PC-9 (cell line): ENCODE measurements at regions of chr7 and their contacts with region 1.

Region 1: GRCh38 chr7:27160546-27161213 is 4.2 kb upstream of the HOXA7 start:
- DNase-seq: peak; percentile 70 to 88
- H3K4me3 ChIP-seq: peak overlapping the region; percentile 71
- H3K27ac ChIP-seq: no peak overlapping the region
- H3K4me1 ChIP-seq: 0 out of 2 replicates have a peak, but pooled peaks cover 3% of the 10 kb centered on the region
- H3K27me3 ChIP-seq: no peaks in the 10 kb centered on the region
- CTCF ChIP-seq: peak; percentile 100

Region 2: GRCh38 chr7:25565949-25566348 is 1594.7 kb before region 1 on chr7:
- CTCF ChIA-PET with region 1: no interaction called
- POLR2A ChIA-PET with region 1: no interaction called
- intact Hi-C with region 1: loop called (anchors 5 kb)
- DNase-seq: peak; percentile 66 to 67
- H3K4me3 ChIP-seq: no peak overlapping the region
- H3K27ac ChIP-seq: no peak overlapping the region
- H3K4me1 ChIP-seq: no peaks in the 10 kb centered on the region
- H3K27me3 ChIP-seq: peaks cover 45% of the 10 kb centered on the region
- CTCF ChIP-seq: peak; percentile 100

Region 3: GRCh38 chr7:26090927-26091519 is 1069.7 kb before region 1 on chr7:
- CTCF ChIA-PET with region 1: no interaction called
- POLR2A ChIA-PET with region 1: no interaction called
- intact Hi-C with region 1: loop called (anchors 5 kb)
- DNase-seq: peak in 1 of 2 experiments; percentile 50
- H3K4me3 ChIP-seq: no peak overlapping the region
- H3K27ac ChIP-seq: no peak overlapping the region
- H3K4me1 ChIP-seq: peaks cover 31% of the 10 kb centered on the region
- H3K27me3 ChIP-seq: no peaks in the 10 kb centered on the region
- CTCF ChIP-seq: peak; percentile 92

Region 4: DNA sequence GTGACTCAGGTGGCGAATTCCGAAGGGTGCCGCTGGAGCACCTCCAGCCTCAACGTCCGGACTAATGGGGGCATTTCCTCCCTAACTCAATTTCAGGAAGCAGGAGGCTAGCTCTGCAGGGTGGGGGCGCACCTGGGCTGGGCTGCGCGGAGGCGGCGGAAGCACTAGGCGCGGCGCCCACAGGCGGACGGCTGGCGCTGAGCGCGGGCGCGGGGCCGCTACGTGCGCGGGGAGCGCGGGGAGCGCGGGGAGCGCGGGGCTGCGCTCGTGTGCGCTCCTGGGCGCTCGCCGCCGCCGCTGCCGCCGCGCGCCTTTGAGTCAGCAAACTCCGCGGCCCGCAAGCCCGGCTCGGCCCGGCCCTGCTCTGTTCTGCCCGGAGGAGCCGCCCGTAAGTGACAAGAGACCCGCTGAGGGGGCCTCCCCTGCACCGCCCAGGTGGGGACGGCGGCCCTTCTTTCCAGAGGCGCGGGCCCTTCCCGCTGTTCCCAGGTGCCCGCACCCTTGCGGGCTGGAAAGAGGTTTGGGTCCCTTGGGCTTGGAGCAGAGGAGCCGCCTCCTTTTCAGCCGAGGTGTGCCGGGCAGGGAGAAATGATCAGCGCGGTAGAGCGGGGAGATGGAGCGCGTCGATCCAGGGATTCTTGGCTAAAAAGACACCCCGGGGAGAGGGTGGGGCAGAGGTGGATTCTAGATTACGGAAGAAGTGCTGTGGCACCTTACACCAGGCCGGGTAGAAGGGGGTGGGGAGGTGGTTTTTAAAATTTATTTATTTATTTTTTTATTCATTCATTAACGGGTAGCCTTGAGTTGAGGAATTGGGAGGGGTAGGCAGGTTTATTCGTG is 868.8 kb before region 1 on chr7 and contains the start of gene SNX10:
- CTCF ChIA-PET with region 1: no interaction called
- POLR2A ChIA-PET with region 1: no interaction called
- intact Hi-C with region 1: no loop called
- DNase-seq: peak; percentile 59 to 76
- H3K4me3 ChIP-seq: peak within 1 kb of the TSS; percentile 88
- H3K27ac ChIP-seq: no peak within 1 kb of the TSS
- H3K4me1 ChIP-seq: peaks cover 13% of the 10 kb centered on the region
- H3K27me3 ChIP-seq: no peaks in the 10 kb centered on the region
- CTCF ChIP-seq: peak; percentile 61; the same call in 1 of the 2 replicates
- total RNA-seq, gene SNX10: 9.1 and 9.8 TPM in 2 replicates

Region 5: GRCh38 chr7:26686448-26686981 is 474.2 kb before region 1 on chr7:
- CTCF ChIA-PET with region 1: interaction called, 11 read pairs
- POLR2A ChIA-PET with region 1: no interaction called
- intact Hi-C with region 1: loop called (anchors 1 kb)
- DNase-seq: peak in 1 of 2 experiments; percentile 7
- H3K4me3 ChIP-seq: no peak overlapping the region
- H3K27ac ChIP-seq: no peak overlapping the region
- H3K4me1 ChIP-seq: no peaks in the 10 kb centered on the region
- H3K27me3 ChIP-seq: no peaks in the 10 kb centered on the region
- CTCF ChIP-seq: peak; percentile 94

Region 6: GRCh38 chr7:26864309-26865093 is 296.2 kb before region 1 on chr7 and contains the start of gene SKAP2:
- CTCF ChIA-PET with region 1: interaction called, 3 read pairs
- POLR2A ChIA-PET with region 1: interaction called, 3 read pairs
- intact Hi-C with region 1: loop called (anchors 1 kb)
- DNase-seq: peak; percentile 98 to 100
- H3K4me3 ChIP-seq: peak within 1 kb of the TSS; percentile 77
- H3K27ac ChIP-seq: peak within 1 kb of the TSS; percentile 84
- H3K4me1 ChIP-seq: peaks cover 58% of the 10 kb centered on the region
- H3K27me3 ChIP-seq: no peaks in the 10 kb centered on the region
- CTCF ChIP-seq: no peak
- total RNA-seq, gene SKAP2: 59.2 and 74.9 TPM in 2 replicates

Region 7: DNA sequence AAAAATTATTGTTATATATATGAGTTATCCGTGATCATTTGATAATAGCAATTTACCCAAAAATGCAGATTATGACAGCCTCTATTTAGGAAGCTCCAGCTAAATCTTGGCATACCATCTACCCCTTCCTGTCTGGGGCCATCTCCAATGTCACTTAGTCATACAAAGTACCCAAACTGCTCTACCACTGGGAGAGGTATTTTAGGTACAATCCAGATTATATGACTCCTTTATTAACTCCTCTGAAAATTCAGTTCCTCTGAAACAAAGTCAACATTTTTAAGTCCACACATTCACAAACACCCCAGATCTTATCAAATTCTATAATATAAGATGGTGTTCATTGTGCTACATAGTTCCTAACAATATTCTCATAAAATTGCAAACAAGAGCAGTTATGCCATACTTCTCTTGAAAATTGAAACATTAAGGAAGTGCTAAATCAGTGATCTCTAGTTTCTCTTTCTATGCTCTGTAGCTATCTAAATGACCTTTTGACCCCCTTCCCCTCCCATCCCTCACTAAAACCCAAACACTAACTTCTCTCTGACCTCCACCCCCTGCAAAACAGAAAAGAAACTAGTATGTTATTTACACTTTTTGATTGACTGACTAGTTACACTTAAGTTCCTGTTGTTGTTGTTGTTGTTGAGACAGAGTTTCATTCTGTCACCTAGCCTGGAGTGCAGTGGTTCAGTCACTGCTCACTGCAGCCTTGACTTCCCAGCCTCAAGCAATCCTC is 81.3 kb before region 1 on chr7:
- CTCF ChIA-PET with region 1: no interaction called
- POLR2A ChIA-PET with region 1: no interaction called
- intact Hi-C with region 1: no loop called
- DNase-seq: peak in 1 of 2 experiments; percentile 63
- H3K4me3 ChIP-seq: no peak overlapping the region
- H3K27ac ChIP-seq: peak overlapping the region; percentile 84
- H3K4me1 ChIP-seq: peaks cover 56% of the 10 kb centered on the region
- H3K27me3 ChIP-seq: no peaks in the 10 kb centered on the region
- CTCF ChIP-seq: no peak

Region 8: GRCh38 chr7:27130540-27131389 is 29.9 kb before region 1 on chr7 and contains the start of gene HOXA4:
- CTCF ChIA-PET with region 1: no interaction called
- POLR2A ChIA-PET with region 1: no interaction called
- intact Hi-C with region 1: no loop called
- DNase-seq: no peak
- H3K4me3 ChIP-seq: no peak within 1 kb of the TSS
- H3K27ac ChIP-seq: no peak within 1 kb of the TSS
- H3K4me1 ChIP-seq: peaks cover 34% of the 10 kb centered on the region
- H3K27me3 ChIP-seq: no peaks in the 10 kb centered on the region
- CTCF ChIP-seq: no peak
- total RNA-seq, gene HOXA4: not detected in 2 replicates